ENCODE measurements at regions of chr5 and their contacts with region 1.

Region 1: GRCh38 chr5:133025804-133026663 is at the start of gene ZCCHC10:
- DNase-seq: peak; percentile 96 to 98
- ATAC-seq: peak; percentile 99
- H3K4me3 ChIP-seq: peak within 1 kb of the TSS; percentile 58 to 98
- H3K27ac ChIP-seq: peak within 1 kb of the TSS; percentile 91 to 95
- H3K4me1 ChIP-seq: no peaks in the 10 kb centered on the region
- H3K27me3 ChIP-seq: no peaks in the 10 kb centered on the region
- total RNA-seq, gene ZCCHC10: 17.3 to 31.4 TPM

Region 2: GRCh38 chr5:132714456-132715307 is 311.4 kb before region 1 on chr5:
- intact Hi-C with region 1: no loop called
- DNase-seq: no peak
- ATAC-seq: no peak
- H3K4me3 ChIP-seq: no peak overlapping the region
- H3K27ac ChIP-seq: no peak overlapping the region
- H3K4me1 ChIP-seq: no peaks in the 10 kb centered on the region
- H3K27me3 ChIP-seq: no peaks in the 10 kb centered on the region

Region 3: DNA sequence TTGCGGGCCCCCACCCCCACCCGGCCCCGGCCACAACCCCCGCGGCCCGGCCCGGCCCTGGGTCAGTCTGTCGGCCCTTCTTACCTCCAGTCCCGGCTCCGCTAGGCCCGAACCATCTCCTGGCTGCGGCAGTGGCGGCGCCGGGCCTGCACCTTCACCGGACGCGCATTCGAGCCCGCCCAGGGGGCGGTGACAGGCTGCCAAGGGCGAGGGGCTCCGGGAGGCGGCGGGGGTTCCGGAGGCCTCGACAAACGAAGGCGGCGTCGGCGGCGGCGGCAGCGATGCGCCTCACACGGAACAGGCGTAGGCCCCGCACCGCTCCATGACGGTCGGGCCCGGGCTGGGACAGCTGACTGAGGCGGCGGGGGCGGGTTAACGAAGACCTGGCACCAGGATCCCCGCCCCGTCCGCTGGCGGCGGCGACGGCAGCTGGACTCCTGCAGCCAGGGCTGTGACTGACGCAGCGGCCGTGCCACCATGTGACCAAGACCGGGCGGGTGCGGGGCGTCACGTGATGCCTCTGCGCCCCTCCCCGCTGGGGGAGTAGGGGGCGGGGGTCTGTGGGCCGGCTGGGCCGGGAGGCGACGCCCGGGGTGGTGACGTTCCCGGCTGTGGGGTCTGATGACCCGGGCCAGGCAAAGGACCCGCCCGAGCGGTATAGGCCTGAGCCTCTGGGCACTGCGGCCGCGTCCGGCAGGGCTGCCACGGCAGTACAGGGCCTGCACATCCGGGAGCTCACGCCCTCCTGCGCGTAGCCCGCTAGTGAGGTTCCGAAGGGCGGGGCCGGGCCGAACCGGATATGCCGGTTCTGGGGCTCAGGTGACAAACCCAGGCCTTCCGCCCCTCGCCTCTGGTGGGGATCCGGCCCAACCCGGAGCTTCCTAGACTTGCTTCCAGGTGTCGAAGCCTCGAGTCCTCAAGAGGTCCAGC is 62.6 kb before region 1 on chr5 and contains the start of gene AFF4:
- intact Hi-C with region 1: loop called in 1 of 2 experiments (anchors 5 kb)
- DNase-seq: peak; percentile 99
- ATAC-seq: peak; percentile 99
- H3K4me3 ChIP-seq: peak within 1 kb of the TSS; percentile 94 to 98
- H3K27ac ChIP-seq: peak within 1 kb of the TSS; percentile 100
- H3K4me1 ChIP-seq: peaks cover 3 to 7% of the 10 kb centered on the region in 2 donors
- H3K27me3 ChIP-seq: no peaks in the 10 kb centered on the region
- total RNA-seq, gene AFF4: 100 to 131 TPM

Region 4: DNA sequence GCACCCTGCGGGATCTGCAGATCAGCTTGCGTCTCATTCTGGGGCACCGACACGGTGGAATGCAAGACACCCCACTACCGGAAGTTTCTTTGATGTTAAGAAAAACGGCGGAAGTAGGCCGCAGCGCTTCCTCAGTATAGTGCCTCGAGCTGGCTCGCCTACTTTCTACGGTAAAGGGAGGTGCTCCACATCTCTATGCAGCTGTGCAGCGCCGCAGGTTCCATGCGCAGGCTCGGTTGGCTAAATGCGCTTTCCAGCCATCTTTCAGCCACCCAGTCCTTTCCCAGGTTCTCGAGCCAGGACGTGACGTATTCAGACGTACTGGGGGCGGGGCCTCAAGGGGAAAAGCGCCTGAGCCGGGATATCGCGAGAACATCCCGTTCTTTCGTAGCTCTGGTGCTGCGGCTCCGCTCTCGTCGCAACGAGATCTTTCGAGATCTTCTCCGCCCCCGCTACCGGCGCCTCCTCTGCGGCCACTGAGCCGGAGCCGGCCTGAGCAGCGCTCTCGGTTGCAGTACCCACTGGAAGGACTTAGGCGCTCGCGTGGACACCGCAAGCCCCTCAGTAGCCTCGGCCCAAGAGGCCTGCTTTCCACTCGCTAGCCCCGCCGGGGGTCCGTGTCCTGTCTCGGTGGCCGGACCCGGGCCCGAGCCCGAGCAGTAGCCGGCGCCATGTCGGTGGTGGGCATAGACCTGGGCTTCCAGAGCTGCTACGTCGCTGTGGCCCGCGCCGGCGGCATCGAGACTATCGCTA is 25.7 kb after region 1 on chr5 and contains the start of gene HSPA4:
- intact Hi-C with region 1: loop called (anchors 1 to 2 kb)
- DNase-seq: peak; percentile 98 to 99
- ATAC-seq: peak; percentile 98
- H3K4me3 ChIP-seq: peak within 1 kb of the TSS; percentile 20 to 95
- H3K27ac ChIP-seq: peak within 1 kb of the TSS; percentile 91 to 98
- H3K4me1 ChIP-seq: peaks cover 0 to 5% of the 10 kb centered on the region in 2 donors
- H3K27me3 ChIP-seq: no peaks in the 10 kb centered on the region
- total RNA-seq, gene HSPA4: 56.1 to 135 TPM